Heart left ventricle (tissue), 16 donors: ENCODE measurements at regions of chr1 and their contacts with region 1.

Region 1: GRCh38 chr1:89065079-89065868 is at the start of gene GBP1:
- DNase-seq: peak in 1 of 5 donors; percentile 44
- ATAC-seq: peak; percentile 74 to 93 (median 85)
- H3K4me3 ChIP-seq: peak within 1 kb of the TSS; percentile 32 to 73 (median 60)
- H3K27ac ChIP-seq: peak within 1 kb of the TSS; percentile 63 to 92 (median 82)
- H3K4me1 ChIP-seq: peaks cover 0 to 62% (median 12%) of the 10 kb centered on the region in 12 donors
- H3K27me3 ChIP-seq: no peaks in the 10 kb centered on the region
- CTCF ChIP-seq: no peak
- POLR2A ChIP-seq: peak in 1 of 2 donors; percentile 34
- total RNA-seq, gene GBP1: 3.6 to 170 (median 6.4) TPM

Region 2: DNA sequence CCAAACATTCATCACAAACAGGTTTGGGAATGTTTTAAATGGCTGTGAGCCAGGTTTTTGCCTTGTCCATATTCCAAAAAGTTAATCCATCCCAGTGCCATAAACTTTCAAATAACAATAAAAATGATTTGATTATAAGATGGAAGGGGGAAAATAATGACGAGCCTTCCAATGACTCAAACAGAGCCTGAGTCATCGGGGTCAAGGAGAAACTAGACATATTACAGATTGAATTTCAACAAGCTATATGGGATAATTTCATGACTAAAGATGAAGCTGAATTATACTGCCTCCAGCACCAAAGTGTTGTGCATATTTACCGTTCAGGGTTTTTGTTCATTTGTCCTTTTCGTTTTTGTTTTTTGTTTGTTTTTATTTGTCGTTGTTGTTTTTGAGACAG is 577.0 kb before region 1 on chr1:
- intact Hi-C with region 1: no loop called
- DNase-seq: no peak
- ATAC-seq: peak in 1 of 4 donors; percentile 43
- H3K4me3 ChIP-seq: no peak overlapping the region
- H3K27ac ChIP-seq: no peak overlapping the region
- H3K4me1 ChIP-seq: peaks cover 0 to 7% (median 0%) of the 10 kb centered on the region in 12 donors
- H3K27me3 ChIP-seq: no peaks in the 10 kb centered on the region
- CTCF ChIP-seq: no peak
- POLR2A ChIP-seq: no peak

Region 3: DNA sequence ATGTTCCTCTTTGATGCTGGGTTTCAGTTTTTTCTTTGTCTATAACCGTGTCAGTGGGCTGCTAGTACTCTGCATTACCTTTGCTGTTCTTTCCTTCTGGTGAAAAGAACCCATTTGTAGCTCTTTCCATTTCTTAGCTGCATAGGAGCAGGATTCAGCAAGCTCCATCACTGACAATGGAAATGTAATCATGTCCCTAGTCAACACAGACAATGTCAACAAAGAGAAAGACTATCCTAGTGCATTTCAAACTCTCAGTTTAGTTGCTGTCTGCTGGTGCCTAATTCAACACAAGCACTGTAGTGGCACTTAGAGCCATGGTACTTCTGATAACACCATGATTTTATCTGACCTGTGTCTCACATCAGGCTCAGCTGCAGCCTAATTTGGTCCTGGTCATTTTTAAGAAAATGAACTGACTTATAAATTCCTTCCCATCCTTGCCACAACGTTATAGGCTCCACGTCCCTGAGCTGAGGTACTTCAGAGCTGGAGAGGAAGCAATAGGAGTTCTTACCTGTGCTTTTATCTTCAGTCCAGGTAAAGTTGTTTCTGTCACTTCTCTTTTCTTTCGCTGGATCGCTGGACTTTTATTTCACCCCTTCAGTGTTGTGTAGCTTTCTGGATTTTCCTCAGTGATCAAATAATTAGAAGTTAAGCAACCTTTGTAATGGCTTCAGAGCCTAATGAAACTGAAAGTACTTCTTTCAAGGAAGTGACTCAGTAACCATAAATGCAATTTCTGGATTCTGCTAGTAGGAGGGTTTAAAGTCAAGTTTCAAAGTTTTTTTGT is 42.9 kb before region 1 on chr1 and contains the start of gene GBP3:
- intact Hi-C with region 1: loop called in 2 of 10 experiments (anchors 5 kb)
- DNase-seq: no peak
- ATAC-seq: peak; percentile 42 to 85 (median 70)
- H3K4me3 ChIP-seq: peak within 1 kb of the TSS; percentile 21 to 85 (median 57)
- H3K27ac ChIP-seq: peak within 1 kb of the TSS; percentile 65 to 94 (median 79)
- H3K4me1 ChIP-seq: peaks cover 0 to 44% (median 6%) of the 10 kb centered on the region in 12 donors
- H3K27me3 ChIP-seq: no peaks in the 10 kb centered on the region
- CTCF ChIP-seq: no peak
- POLR2A ChIP-seq: no peak
- total RNA-seq, gene GBP3: 1.2 to 30.1 (median 6.1) TPM

Region 4: GRCh38 chr1:89114662-89115061 is 49.4 kb after region 1 on chr1:
- intact Hi-C with region 1: loop called in 1 of 10 experiments (anchors 5 kb)
- DNase-seq: no peak
- ATAC-seq: no peak
- H3K4me3 ChIP-seq: no peak overlapping the region
- H3K27ac ChIP-seq: no peak overlapping the region
- H3K4me1 ChIP-seq: peaks cover 0 to 5% (median 0%) of the 10 kb centered on the region in 12 donors
- H3K27me3 ChIP-seq: no peaks in the 10 kb centered on the region
- CTCF ChIP-seq: no peak
- POLR2A ChIP-seq: no peak